Activated B cell treated with CpG ODN at 0.5 μM for 24 hours (primary cell): ENCODE measurements at regions of chr9 and their contacts with region 1.

Region 1: GRCh38 chr9:72443855-72444254 is 77.6 kb upstream of the TMC1 start:
- DNase-seq: no peak
- ATAC-seq: peak; percentile 91
- H3K4me3 Mint-ChIP-seq: peak overlapping the region; percentile 59
- H3K27ac Mint-ChIP-seq: peak overlapping the region; percentile 91
- H3K4me1 Mint-ChIP-seq: peaks cover 37% of the 10 kb centered on the region
- H3K27me3 Mint-ChIP-seq: no peaks in the 10 kb centered on the region
- CTCF ChIP-seq: no peak

Region 2: DNA sequence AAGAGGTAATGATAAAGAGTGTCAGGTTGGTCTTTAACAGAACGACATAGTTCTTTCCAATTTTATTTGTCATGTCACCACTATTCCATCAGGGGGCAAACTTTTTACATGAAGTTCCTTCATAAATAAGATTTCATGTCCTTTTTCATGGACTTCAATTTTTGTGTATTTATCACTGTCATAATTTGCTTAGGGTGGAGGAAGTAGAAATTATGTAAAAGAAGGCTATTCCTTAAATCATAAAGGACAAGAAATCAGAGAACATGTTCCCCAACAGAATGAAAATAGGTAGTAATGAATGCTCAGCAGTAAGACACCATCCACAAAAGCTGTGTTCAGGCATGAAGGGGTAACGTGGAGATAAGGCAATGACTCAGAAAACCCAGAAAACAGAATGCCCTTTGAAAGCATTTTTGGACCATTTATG is 151.6 kb before region 1 on chr9:
- CTCF ChIA-PET with region 1: no interaction called
- POLR2A ChIA-PET with region 1: no interaction called
- intact Hi-C with region 1: loop called (anchors 1 kb)
- DNase-seq: no peak
- ATAC-seq: peak; percentile 52
- H3K4me3 Mint-ChIP-seq: no peak overlapping the region
- H3K27ac Mint-ChIP-seq: no peak overlapping the region
- H3K4me1 Mint-ChIP-seq: peaks cover 17% of the 10 kb centered on the region
- H3K27me3 Mint-ChIP-seq: no peaks in the 10 kb centered on the region
- CTCF ChIP-seq: no peak

Region 3: DNA sequence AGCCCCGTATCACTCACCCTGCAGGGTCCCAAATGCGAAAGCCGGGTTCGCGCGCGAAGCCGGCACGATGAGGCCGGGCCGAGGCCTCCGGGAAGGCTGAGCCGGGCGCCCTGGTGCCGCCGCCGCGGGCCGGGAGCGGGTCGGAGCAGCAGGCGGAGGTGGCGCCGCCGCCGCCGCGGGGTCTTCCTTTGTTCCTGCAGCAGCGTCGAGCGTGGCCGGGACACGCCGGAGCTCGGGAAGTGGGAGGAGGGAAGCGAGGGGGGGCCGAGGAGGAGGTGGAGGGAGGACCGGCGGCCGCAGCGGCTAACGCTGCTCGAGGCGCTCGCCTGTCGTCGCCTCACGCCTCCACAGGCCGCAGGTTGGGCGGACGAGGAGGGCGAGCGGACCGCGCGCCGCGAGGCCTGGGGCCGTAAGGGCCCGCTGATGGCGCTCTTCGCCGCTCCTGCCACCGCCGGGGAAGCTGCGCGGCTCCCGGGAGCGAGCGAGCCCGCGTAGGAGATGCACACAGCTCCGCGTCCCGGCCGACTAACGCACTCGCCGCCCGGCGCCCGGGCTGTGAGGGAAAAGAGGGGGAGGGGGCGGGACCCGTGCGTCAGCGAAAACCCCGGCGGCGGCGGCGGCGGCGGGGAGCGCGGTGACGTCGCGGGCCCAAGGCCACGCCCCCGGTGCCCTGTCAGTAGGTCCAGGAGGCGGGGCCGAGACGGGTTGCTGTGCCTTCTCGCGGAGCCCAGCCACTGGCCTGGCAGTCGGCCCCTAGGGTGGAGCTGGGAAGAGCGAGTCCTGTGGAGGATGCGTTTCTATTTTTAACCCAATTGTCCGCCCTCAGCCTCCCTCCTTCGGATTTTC is 79.0 kb before region 1 on chr9 and contains the start of gene ZFAND5:
- CTCF ChIA-PET with region 1: interaction called, 6 read pairs
- POLR2A ChIA-PET with region 1: interaction called, 41 read pairs
- intact Hi-C with region 1: loop called (anchors 1 kb)
- DNase-seq: peak; percentile 89
- ATAC-seq: peak; percentile 80
- H3K4me3 Mint-ChIP-seq: peak within 1 kb of the TSS; percentile 96
- H3K27ac Mint-ChIP-seq: peak within 1 kb of the TSS; percentile 98
- H3K4me1 Mint-ChIP-seq: peaks cover 40% of the 10 kb centered on the region
- H3K27me3 Mint-ChIP-seq: no peaks in the 10 kb centered on the region
- CTCF ChIP-seq: no peak
- total RNA-seq, gene ZFAND5: 79.2 and 79.5 TPM in 2 replicates

Region 4: GRCh38 chr9:72428329-72428728 is 15.5 kb before region 1 on chr9:
- CTCF ChIA-PET with region 1: no interaction called
- POLR2A ChIA-PET with region 1: no interaction called
- intact Hi-C with region 1: loop called (anchors 1 kb)
- DNase-seq: no peak
- ATAC-seq: no peak
- H3K4me3 Mint-ChIP-seq: no peak overlapping the region
- H3K27ac Mint-ChIP-seq: no peak overlapping the region
- H3K4me1 Mint-ChIP-seq: peaks cover 3% of the 10 kb centered on the region
- H3K27me3 Mint-ChIP-seq: no peaks in the 10 kb centered on the region
- CTCF ChIP-seq: no peak

Region 5: DNA sequence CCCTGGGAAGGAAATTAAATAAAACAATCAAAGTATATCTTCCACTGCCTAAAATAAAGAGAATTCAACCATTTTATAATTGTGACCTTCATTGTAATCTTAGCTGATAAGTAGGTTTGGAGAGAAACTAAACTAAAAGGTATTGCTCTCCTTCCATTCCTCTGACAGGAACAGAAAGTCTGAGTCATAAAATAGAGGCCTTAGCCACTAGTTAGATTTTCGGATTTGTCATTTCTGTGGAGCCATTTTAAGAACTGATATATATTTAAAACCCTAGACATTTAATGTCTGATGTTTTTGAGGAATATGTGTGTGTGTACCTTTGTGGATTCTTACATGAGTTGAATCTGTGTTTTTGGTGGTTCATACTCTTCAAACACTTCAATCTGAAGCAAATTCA is 65.8 kb after region 1 on chr9:
- CTCF ChIA-PET with region 1: no interaction called
- POLR2A ChIA-PET with region 1: no interaction called
- intact Hi-C with region 1: loop called (anchors 5 kb)
- DNase-seq: no peak
- ATAC-seq: no peak
- H3K4me3 Mint-ChIP-seq: no peak overlapping the region
- H3K27ac Mint-ChIP-seq: no peak overlapping the region
- H3K4me1 Mint-ChIP-seq: no peaks in the 10 kb centered on the region
- H3K27me3 Mint-ChIP-seq: no peaks in the 10 kb centered on the region
- CTCF ChIP-seq: no peak

Region 6: DNA sequence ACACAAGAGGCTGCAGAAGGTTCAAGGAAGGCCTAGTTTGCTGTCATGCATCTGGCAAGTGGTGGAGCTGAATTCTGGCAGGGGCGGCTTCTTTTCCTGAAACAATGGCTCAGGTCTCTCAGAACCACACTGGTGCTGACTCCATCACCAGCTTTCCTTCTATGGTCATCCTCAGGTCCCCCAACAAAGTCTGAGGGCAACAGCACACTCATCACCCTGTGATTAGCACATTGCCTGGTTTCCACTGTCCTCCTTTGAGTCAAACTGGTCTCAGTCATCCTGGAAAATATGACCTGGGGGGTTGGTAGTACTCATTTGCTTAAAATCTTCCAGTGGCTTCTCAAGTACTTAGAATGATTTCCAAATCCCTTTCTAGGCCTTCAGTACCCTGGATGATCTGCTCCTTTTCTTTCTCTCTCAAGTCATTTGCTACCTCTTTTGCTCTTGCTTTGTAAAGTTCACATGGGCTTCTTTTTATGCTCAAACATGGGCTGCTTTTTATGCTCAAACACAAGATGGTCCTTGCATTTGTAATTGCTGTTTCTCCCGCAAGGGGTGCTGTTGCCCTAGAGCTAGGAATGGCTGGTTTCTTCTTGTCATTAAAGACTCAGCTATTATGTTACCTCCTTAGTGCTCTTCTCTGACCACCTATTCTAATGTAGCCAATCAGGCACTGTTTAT is 364.1 kb after region 1 on chr9:
- CTCF ChIA-PET with region 1: no interaction called
- POLR2A ChIA-PET with region 1: no interaction called
- intact Hi-C with region 1: no loop called
- DNase-seq: no peak
- ATAC-seq: no peak
- H3K4me3 Mint-ChIP-seq: no peak overlapping the region
- H3K27ac Mint-ChIP-seq: no peak overlapping the region
- H3K4me1 Mint-ChIP-seq: no peaks in the 10 kb centered on the region
- H3K27me3 Mint-ChIP-seq: no peaks in the 10 kb centered on the region
- CTCF ChIP-seq: no peak